Activated CD4-positive, alpha-beta memory T cell treated with anti-CD3 and anti-CD28 coated beads for 36 hours (primary cell): ENCODE measurements at regions of chr6 and their contacts with region 1.

Region 1: GRCh38 chr6:31597006-31597405 is 4.2 kb upstream of the NCR3 start:
- DNase-seq: peak; percentile 53
- H3K4me3 Mint-ChIP-seq: no peak overlapping the region
- H3K27ac Mint-ChIP-seq: peak overlapping the region; percentile 56
- H3K4me1 Mint-ChIP-seq: peaks cover 37% of the 10 kb centered on the region
- H3K27me3 Mint-ChIP-seq: no peaks in the 10 kb centered on the region

Region 2: GRCh38 chr6:30616811-30617564 is 980.0 kb before region 1 on chr6 and contains the start of gene PPP1R10:
- CTCF ChIA-PET with region 1: no interaction called
- POLR2A ChIA-PET with region 1: no interaction called
- intact Hi-C with region 1: no loop called
- DNase-seq: peak; percentile 99
- H3K4me3 Mint-ChIP-seq: peak within 1 kb of the TSS; percentile 97
- H3K27ac Mint-ChIP-seq: peak within 1 kb of the TSS; percentile 98
- H3K4me1 Mint-ChIP-seq: peaks cover 45% of the 10 kb centered on the region
- H3K27me3 Mint-ChIP-seq: peaks cover 5% of the 10 kb centered on the region
- total RNA-seq, gene PPP1R10: 64.5 to 67.4 TPM

Region 3: DNA sequence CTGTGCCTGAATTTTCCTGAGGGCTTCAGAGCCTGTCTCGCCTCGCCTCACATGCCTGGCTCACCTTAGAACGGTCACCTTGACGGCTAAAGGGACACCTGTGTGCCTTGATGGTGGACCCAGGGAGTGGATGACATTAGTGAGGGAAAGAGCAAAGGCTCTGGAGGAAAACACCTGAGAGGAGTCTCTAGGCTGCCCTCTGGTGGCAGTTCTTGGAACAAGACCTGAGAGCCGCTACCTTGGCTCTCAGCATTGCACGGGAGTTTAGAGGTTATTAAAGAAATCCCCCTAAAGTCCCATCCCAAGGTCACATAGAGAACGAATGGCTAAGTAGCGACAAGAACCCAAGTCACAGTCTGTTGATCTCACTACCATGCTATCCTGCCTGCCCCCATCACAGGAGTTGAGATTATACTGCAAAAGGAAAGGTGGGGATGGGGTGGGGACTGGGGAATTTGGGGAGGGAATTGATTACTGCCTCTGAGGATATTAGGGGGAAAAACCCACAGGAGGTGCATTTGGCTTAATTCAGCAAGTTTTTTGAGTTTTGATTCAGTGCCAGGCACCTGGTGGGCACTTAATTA is 468.8 kb before region 1 on chr6:
- CTCF ChIA-PET with region 1: no interaction called
- POLR2A ChIA-PET with region 1: no interaction called
- intact Hi-C with region 1: no loop called
- DNase-seq: peak; percentile 81
- H3K4me3 Mint-ChIP-seq: no peak overlapping the region
- H3K27ac Mint-ChIP-seq: no peak overlapping the region
- H3K4me1 Mint-ChIP-seq: peaks cover 2% of the 10 kb centered on the region
- H3K27me3 Mint-ChIP-seq: peaks cover 2% of the 10 kb centered on the region

Region 4: GRCh38 chr6:31493875-31494694 is 102.9 kb before region 1 on chr6:
- CTCF ChIA-PET with region 1: interaction called, 49 read pairs
- POLR2A ChIA-PET with region 1: interaction called, 3 read pairs
- intact Hi-C with region 1: loop called (anchors 1 kb)
- DNase-seq: peak; percentile 89
- H3K4me3 Mint-ChIP-seq: peak overlapping the region; percentile 90
- H3K27ac Mint-ChIP-seq: peak overlapping the region; percentile 94
- H3K4me1 Mint-ChIP-seq: peaks cover 42% of the 10 kb centered on the region
- H3K27me3 Mint-ChIP-seq: no peaks in the 10 kb centered on the region

Region 5: GRCh38 chr6:31568537-31568961 is 28.5 kb before region 1 on chr6:
- CTCF ChIA-PET with region 1: interaction called, 1,658 read pairs
- POLR2A ChIA-PET with region 1: interaction called, 259 read pairs
- intact Hi-C with region 1: no loop called
- DNase-seq: peak; percentile 86
- H3K4me3 Mint-ChIP-seq: peak overlapping the region; percentile 35
- H3K27ac Mint-ChIP-seq: peak overlapping the region; percentile 72
- H3K4me1 Mint-ChIP-seq: peaks cover 72% of the 10 kb centered on the region
- H3K27me3 Mint-ChIP-seq: no peaks in the 10 kb centered on the region

Region 6: DNA sequence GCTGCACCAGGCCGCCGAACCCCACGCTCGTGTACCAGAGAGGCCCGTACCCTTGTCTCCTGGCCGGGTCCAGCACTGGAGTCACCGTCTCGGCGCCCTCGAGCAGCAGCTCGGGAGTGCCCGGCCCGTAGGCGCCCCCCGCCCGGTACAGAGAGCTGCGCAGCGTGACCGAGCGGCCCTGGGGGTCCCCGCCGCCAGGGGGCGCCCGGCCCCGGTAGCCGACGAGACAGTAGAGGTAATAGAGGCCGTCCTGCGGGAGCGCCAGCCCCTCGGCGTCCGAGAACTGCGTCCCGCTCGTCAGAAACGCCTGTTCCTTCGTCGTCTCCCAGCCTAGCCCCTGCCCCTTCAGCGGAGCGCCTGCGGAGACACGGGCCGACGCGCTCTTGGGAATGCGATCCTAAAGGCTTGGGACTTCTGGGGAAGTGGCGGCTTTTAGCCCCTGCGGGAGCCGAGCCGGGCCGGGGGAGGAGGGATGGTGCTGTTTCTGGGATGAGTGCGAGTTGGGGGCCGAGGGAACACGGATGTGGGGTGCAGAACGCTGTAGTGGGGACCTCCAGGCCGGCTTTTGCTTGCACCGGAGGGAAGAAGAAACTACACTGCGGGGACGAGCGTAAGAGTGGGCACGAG is 16.1 kb before region 1 on chr6:
- CTCF ChIA-PET with region 1: interaction called, 740 read pairs
- POLR2A ChIA-PET with region 1: interaction called, 259 read pairs
- intact Hi-C with region 1: loop called (anchors 1 kb)
- DNase-seq: peak; percentile 92
- H3K4me3 Mint-ChIP-seq: peak overlapping the region; percentile 97
- H3K27ac Mint-ChIP-seq: peak overlapping the region; percentile 92
- H3K4me1 Mint-ChIP-seq: peaks cover 44% of the 10 kb centered on the region
- H3K27me3 Mint-ChIP-seq: no peaks in the 10 kb centered on the region

Region 7: GRCh38 chr6:31609519-31610406 is 12.8 kb after region 1 on chr6:
- CTCF ChIA-PET with region 1: interaction called, 27 read pairs
- POLR2A ChIA-PET with region 1: interaction called, 3 read pairs
- intact Hi-C with region 1: no loop called
- DNase-seq: no peak
- H3K4me3 Mint-ChIP-seq: no peak overlapping the region
- H3K27ac Mint-ChIP-seq: no peak overlapping the region
- H3K4me1 Mint-ChIP-seq: peaks cover under 1% of the 10 kb centered on the region
- H3K27me3 Mint-ChIP-seq: no peaks in the 10 kb centered on the region

Region 8: GRCh38 chr6:31614684-31615578 is 17.9 kb after region 1 on chr6 and contains the start of gene AIF1:
- CTCF ChIA-PET with region 1: interaction called, 27 read pairs
- POLR2A ChIA-PET with region 1: interaction called, 3 read pairs
- intact Hi-C with region 1: no loop called
- DNase-seq: no peak
- H3K4me3 Mint-ChIP-seq: peak within 1 kb of the TSS; percentile 66
- H3K27ac Mint-ChIP-seq: peak within 1 kb of the TSS; percentile 55
- H3K4me1 Mint-ChIP-seq: peaks cover 33% of the 10 kb centered on the region
- H3K27me3 Mint-ChIP-seq: no peaks in the 10 kb centered on the region
- total RNA-seq, gene AIF1: 26.1 to 29.0 TPM